ENCODE measurements at regions of chr6 and their contacts with region 1.

Region 1: GRCh38 chr6:6581054-6581453 is 7.5 kb upstream of the LY86 start:
- DNase-seq: peak in 20 of 35 experiments; percentile 7 to 73 (median 27)
- ATAC-seq: peak; percentile 50 to 94 (median 80)
- H3K4me3 ChIP-seq: no peak overlapping the region
- H3K4me3 Mint-ChIP-seq: no peak overlapping the region
- H3K27ac ChIP-seq: no peak overlapping the region
- H3K27ac Mint-ChIP-seq: peak overlapping the region; percentile 51 to 53
- H3K4me1 ChIP-seq: peaks cover 5 to 12% of the 10 kb centered on the region in 2 experiments
- H3K4me1 Mint-ChIP-seq: peaks cover 26 to 44% (median 35%) of the 10 kb centered on the region in 3 donors
- H3K27me3 ChIP-seq: peaks cover 0 to 5% of the 10 kb centered on the region in 2 experiments
- H3K27me3 Mint-ChIP-seq: peaks cover 0 to 2% of the 10 kb centered on the region in 2 donors

Region 2: DNA sequence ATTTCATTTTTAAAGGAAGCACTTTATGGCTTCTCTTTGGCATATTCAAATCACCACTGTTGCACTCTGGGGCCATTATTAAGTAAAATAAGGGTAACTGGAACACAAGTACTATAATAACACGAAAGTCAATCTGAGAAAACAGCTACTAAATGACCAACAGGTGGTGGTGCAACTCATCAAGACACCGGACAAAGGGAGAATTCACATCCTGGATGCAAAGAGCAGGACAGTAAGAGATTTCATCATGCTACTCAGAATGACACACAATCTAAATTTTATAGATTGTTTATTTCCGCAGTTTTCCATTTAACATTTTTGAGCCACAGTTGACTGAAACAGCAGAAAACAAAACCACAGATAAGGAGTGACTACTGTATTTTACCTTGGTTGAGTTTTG is 20.1 kb before region 1 on chr6:
- CTCF ChIA-PET with region 1: interaction called in 1 of 2 experiments, 12 read pairs
- POLR2A ChIA-PET with region 1: no interaction called
- DNase-seq: no peak
- ATAC-seq: no peak
- H3K4me3 ChIP-seq: no peak overlapping the region
- H3K4me3 Mint-ChIP-seq: no peak overlapping the region
- H3K27ac ChIP-seq: no peak overlapping the region
- H3K27ac Mint-ChIP-seq: no peak overlapping the region
- H3K4me1 ChIP-seq: peaks cover 0 to 4% of the 10 kb centered on the region in 2 experiments
- H3K4me1 Mint-ChIP-seq: peaks cover 5 to 9% (median 8%) of the 10 kb centered on the region in 3 donors
- H3K27me3 ChIP-seq: peaks cover 0 to 10% of the 10 kb centered on the region in 2 experiments
- H3K27me3 Mint-ChIP-seq: no peaks in the 10 kb centered on the region

Region 3: DNA sequence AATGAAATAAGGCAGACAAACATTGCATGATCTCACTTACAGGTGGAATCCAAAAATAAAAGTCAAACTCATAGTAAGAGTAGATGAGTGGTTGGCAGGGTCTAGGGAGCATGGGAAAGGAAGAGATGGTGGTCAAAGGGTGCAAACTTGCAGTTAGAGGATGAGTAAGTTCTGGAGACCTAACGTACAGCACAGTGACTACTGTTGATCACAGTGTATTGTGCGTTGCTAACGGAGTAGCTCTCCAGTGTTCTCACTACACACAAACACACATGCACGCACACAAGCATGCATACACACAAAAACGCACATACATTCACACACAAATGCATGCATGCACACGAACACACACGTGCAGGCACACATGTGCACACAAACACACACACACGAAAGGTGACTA is 62.3 kb after region 1 on chr6:
- CTCF ChIA-PET with region 1: no interaction called
- POLR2A ChIA-PET with region 1: no interaction called
- DNase-seq: no peak
- ATAC-seq: no peak
- H3K4me3 ChIP-seq: no peak overlapping the region
- H3K4me3 Mint-ChIP-seq: no peak overlapping the region
- H3K27ac ChIP-seq: no peak overlapping the region
- H3K27ac Mint-ChIP-seq: no peak overlapping the region
- H3K4me1 ChIP-seq: no peaks in the 10 kb centered on the region
- H3K4me1 Mint-ChIP-seq: peaks cover 0 to 10% (median 0%) of the 10 kb centered on the region in 3 donors
- H3K27me3 ChIP-seq: peaks cover 0 to 3% of the 10 kb centered on the region in 2 experiments
- H3K27me3 Mint-ChIP-seq: no peaks in the 10 kb centered on the region

Region 4: DNA sequence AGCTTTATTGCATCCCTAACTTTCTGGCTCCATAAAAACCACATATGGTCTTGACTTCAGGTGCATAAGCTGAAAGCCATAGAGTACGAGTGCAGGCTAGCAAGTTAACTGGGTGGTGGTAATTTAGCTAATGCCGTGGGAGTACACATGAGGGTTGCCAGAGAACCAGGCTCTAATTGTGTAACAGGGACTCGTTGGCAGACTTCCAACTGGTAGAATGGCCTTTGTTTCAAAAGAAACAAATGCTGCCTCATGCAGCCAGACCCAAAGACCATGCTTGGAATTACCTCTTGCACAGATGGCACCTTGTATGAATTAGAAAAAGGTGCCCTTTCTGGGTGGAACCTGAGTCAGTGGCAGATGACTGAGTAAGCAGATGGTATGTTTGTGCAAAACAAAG is 80.6 kb after region 1 on chr6:
- CTCF ChIA-PET with region 1: interaction called in 1 of 2 experiments, 3 read pairs
- POLR2A ChIA-PET with region 1: interaction called in 1 of 2 experiments, 10 read pairs
- DNase-seq: no peak
- ATAC-seq: no peak
- H3K4me3 ChIP-seq: no peak overlapping the region
- H3K4me3 Mint-ChIP-seq: peak overlapping the region in 1 of 3 donors; percentile 78
- H3K27ac ChIP-seq: no peak overlapping the region
- H3K27ac Mint-ChIP-seq: no peak overlapping the region
- H3K4me1 ChIP-seq: peaks cover 21 to 51% of the 10 kb centered on the region in 2 experiments
- H3K4me1 Mint-ChIP-seq: peaks cover 49 to 70% (median 50%) of the 10 kb centered on the region in 3 donors
- H3K27me3 ChIP-seq: peaks cover 0 to 2% of the 10 kb centered on the region in 2 experiments
- H3K27me3 Mint-ChIP-seq: no peaks in the 10 kb centered on the region

Measured in T-cell (primary cell).